Right ventricle myocardium inferior (tissue), 1 donor: ENCODE measurements at regions of chr12 and their contacts with region 1.

Region 1: DNA sequence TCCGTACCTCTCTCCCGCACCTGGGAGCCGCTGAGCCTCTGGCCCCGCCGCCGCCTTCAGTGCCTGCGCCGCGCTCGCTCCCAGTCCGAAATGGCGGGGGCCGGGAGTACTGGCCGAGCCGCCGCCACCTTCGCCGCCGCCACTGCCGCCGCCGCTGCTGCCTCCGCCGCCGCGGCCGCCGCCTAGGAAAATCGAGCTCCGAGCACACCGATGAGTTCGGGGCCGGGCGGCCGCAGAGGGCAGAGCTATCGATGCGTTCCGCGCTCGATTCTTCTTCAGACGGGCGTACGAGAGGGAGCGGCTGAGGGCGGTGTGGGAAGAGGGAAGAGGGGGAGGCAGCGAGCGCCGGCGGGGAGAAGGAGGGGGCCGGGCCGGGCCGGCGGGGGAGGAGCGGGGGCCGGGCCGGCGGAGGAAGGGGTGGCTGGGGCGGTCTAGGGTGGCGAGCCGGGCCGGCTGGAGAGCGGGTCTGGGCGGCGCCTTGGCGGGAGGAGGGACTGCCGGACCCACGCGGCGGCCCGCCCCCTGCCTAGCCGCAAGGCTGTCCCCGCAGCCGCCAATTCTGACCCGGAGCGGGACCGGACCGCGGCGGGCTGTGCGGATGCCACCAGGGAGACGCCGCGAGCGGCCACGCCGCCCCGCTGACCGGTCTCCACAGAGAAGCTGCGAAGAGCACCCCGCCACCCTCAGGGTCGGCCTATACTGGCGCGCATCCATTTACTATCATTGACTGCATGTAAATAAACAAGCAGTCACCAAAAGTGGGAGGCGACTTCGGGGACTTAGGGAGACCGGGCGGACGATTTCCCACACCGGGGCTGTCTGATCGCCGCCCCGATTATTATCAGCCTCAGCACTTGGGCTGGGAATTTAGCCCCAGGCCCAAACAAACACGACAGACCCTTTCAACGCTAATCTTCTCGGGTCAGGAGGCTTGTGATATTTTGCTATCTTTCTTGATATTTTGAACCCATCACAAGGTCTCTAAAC is at the start of gene KRAS:
- DNase-seq: peak; percentile 99
- ATAC-seq: peak; percentile 99
- total RNA-seq, gene KRAS: 12.7 TPM

Region 2: DNA sequence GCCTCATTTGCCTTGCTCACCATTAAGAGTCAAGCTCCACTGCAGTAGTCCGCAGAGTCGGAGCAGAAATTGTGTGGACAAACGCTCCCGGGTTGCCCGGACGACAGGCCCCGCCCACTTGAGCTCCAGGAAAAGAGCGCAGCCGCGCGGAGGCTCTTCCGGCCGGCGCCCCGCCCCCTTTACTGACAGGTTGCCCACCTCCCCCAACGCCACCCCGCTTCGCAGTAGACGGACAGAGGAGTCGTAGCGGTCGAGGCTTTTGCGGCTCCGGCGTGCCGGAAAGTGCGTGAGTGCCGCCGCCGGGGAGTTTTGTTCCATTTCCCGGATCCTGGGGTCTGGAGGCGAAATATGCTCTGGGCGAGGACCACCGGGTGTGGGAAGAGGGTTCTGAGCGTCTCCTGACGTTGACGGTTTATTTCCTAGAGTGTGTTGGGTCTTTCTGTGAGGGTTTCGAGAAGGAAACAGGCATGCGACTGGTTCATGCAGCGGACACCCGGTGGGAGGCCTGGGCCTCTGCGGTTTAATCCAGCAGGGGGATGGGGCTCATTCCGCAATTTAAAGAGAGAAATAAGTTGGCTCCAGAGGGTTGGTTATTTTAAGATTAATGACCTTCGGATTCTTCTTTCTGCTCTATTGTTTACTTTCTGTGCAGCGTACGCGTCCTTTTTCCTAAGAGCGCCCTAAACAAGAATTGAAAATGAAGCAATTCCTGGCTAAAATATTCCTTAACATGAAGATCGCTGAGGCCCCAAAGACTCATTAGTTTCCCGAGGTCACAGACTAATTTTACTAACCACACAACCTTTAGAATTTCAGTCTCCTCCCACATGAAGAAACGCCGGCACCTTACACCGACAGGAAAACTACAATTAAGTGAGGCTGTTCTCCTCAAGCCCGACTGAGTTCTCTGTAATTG is 55.7 kb before region 1 on chr12 and contains the starts of genes DNAI7 and ETFRF1:
- intact Hi-C with region 1: loop called (anchors 2 kb)
- DNase-seq: peak; percentile 99
- ATAC-seq: peak; percentile 99
- total RNA-seq, gene DNAI7: 2.3 TPM
- total RNA-seq, gene ETFRF1: 65.7 TPM

Region 3: DNA sequence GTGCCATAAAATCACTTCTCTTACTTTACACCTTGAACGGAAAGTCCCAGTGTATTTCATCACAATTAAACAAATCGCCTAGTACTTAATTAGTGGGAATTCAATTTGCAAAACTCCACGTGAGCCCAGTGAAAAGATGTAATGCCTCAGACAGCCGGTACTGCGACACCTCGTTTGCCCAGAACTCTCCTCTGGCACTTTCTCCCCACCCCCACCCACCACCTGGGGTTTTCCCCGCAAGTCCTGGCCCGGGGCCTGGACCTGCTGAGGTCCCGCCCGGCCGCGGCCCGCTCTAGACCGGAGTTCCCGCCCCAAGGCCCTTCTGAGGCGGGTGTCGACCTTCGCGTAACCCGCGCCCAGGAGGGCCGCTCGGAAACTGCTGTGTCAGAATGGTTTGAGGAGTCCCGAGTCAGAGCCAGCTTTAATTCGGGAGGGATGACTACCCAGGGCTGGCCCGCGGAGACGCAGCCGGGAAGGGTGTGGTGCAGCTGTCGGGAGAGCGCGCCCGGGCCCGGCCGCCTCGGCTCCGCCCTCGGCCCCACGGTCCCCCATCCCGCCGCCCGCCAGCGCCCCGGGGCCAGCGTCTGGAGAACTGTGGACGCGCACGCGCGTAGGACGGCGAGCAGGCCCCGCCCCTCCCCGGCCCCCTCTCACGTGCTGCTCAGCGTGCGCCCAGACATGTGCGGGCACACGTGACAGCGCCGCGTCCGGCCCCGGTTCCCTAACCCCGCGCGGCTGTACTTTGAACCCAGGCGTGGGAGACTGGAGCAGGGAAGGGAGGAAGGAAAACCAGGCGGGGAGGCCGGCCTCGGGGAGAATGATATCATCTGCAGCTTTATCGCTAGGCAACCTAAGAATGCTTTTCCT is 863.0 kb after region 1 on chr12:
- intact Hi-C with region 1: loop called (anchors 5 kb)
- DNase-seq: peak; percentile 96
- ATAC-seq: peak; percentile 96